ENCODE measurements at regions of chr12 and their contacts with region 1.

Region 1: GRCh38 chr12:87995581-87996178 is 33.5 kb downstream of the C12orf50 start:
- DNase-seq: peak; percentile 36 to 60 (median 56)
- ATAC-seq: peak; percentile 97 to 100 (median 98)
- H3K4me3 ChIP-seq: no peak overlapping the region
- H3K27ac ChIP-seq: no peak overlapping the region
- H3K4me1 ChIP-seq: no peaks in the 10 kb centered on the region
- H3K27me3 ChIP-seq: no peaks in the 10 kb centered on the region
- CTCF ChIP-seq: peak; percentile 69 to 75 (median 71)
- POLR2A ChIP-seq: no peak

Region 2: DNA sequence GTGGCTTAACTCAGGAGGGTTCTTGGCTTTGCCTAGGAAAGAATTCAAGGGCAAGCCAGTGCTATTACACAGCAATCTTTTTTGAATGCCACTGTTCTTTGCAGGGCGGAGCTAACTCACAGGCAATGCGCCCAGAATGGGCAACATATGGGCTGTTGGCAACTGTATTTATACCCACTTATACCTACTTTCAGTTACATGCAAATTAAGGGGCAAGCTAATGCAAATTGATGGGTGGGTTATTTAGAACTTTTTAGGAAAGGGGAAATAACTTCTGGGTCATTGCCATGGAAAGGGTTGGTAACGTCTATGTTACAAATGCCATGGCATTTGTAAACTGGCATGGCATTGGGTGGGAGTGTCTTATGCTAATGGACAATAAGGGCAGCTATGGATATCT is 51.9 kb before region 1 on chr12:
- intact Hi-C with region 1: loop called in 1 of 2 experiments (anchors 5 kb)
- DNase-seq: no peak
- ATAC-seq: no peak
- H3K4me3 ChIP-seq: no peak overlapping the region
- H3K27ac ChIP-seq: no peak overlapping the region
- H3K4me1 ChIP-seq: no peaks in the 10 kb centered on the region
- H3K27me3 ChIP-seq: no peaks in the 10 kb centered on the region
- CTCF ChIP-seq: no peak
- POLR2A ChIP-seq: no peak